Dendritic cell treated with granulocyte-macrophage colony-stimulating factor and Interleukin-4, amounts not matched to agents 40 ng/mL and 50 ng/mL, for 4 days (primary cell): ENCODE measurements at regions of chr11 and their contacts with region 1.

Region 1: DNA sequence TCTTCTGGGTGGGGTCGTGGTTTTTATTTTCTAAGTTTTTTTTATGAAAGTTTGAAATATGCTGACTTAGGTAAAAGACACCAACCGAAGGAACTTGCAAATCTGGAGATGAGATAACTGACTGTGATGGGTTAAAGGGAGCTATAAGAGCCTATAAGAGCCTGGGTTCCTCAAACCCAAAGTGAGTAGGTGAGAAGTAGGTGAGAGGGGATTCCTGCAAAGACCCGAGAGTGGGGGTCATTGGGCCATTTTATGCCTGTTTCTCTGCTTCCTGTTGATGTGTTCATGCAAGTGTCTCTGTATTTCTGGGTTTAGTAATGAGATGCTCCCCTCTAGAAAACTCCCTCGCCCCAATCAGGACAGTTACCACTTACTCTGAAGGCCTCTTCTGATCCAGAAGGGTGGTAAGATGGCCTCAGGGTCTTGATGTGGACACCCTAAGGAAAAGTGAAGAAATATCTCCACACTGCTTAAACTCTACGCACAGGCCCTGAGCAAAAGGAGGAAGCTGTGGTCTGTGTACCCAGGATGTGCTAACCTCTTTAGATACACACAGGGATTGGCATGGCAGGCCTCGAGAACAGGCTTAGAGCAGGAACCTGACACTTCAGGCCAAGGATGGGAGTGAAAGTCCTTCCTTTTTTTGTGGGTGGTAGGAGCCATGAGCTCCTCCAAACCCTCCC is 1.8 kb downstream of the FLI1 start:
- H3K4me3 Mint-ChIP-seq: peak overlapping the region; percentile 96
- H3K27ac Mint-ChIP-seq: peak overlapping the region; percentile 93
- H3K4me1 Mint-ChIP-seq: peaks cover 75% of the 10 kb centered on the region
- H3K27me3 Mint-ChIP-seq: peaks cover 9% of the 10 kb centered on the region

Region 2: GRCh38 chr11:128653801-128654231 is 41.9 kb before region 1 on chr11:
- intact Hi-C with region 1: loop called (anchors 5 kb)
- H3K4me3 Mint-ChIP-seq: peak overlapping the region; percentile 66
- H3K27ac Mint-ChIP-seq: peak overlapping the region; percentile 86
- H3K4me1 Mint-ChIP-seq: peaks cover 22% of the 10 kb centered on the region
- H3K27me3 Mint-ChIP-seq: no peaks in the 10 kb centered on the region

Region 3: GRCh38 chr11:129006161-129006560 is 310.5 kb after region 1 on chr11:
- intact Hi-C with region 1: no loop called
- H3K4me3 Mint-ChIP-seq: no peak overlapping the region
- H3K27ac Mint-ChIP-seq: no peak overlapping the region
- H3K4me1 Mint-ChIP-seq: no peaks in the 10 kb centered on the region
- H3K27me3 Mint-ChIP-seq: no peaks in the 10 kb centered on the region